ENCODE measurements at regions of chr4 and their contacts with region 1.

Region 1: DNA sequence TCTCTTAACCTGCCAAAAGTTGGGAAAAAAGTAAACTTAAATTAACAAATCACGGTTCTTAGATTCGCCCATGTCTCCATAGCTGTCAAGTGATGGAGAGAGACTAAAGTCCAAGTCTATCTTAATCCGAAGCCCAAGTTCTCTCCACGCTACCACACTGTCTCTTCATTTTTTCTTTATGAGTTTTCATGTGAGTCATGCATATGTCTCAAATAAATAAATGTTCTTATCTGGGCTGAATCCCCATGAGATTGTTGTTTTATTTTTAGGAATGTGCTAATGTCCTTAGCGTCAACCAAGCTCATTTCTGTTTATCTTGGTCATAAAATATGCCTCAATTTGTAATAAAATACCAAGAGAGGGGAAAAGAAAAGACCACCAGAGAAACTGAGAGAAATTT is 169.3 kb downstream of the RCHY1 start:
- DNase-seq: no peak
- H3K4me3 ChIP-seq: no peak overlapping the region
- H3K27ac ChIP-seq: peak overlapping the region in 5 of 59 donors; percentile 7 to 52 (median 30)
- H3K27me3 ChIP-seq: no peaks in the 10 kb centered on the region
- CTCF ChIP-seq: no peak

Region 2: DNA sequence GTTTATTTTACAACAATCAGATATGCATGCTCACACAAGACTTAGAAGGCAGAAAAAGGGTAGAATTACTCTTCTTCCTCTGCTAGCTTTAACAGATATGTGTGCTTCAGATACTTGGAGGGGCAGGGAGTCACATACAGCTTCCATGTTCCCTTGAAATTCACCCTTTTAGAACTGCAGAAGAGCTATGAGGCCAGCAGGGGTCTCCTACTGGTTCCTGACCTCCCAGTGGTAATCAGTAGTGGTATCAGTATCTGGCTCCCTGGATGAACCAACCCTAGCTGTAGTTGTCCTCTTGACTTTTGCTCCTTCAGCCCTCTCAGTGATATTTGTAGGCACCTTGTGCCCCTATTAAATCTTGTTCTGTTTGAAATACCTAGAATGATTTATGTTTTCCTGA is 87.8 kb after region 1 on chr4:
- intact Hi-C with region 1: loop called in 1 of 2 experiments (anchors 10 kb)
- DNase-seq: no peak
- H3K4me3 ChIP-seq: no peak overlapping the region
- H3K27ac ChIP-seq: no peak overlapping the region
- H3K27me3 ChIP-seq: peaks cover 0 to 5% (median 0%) of the 10 kb centered on the region in 45 donors
- CTCF ChIP-seq: peak in 1 of 56 donors; percentile 7

Region 3: GRCh38 chr4:75490155-75490554 is 145.2 kb after region 1 on chr4:
- intact Hi-C with region 1: no loop called
- DNase-seq: no peak
- H3K4me3 ChIP-seq: no peak overlapping the region
- H3K27ac ChIP-seq: peak overlapping the region in 5 of 59 donors; percentile 12 to 23 (median 16)
- H3K27me3 ChIP-seq: no peaks in the 10 kb centered on the region
- CTCF ChIP-seq: peak in 54 of 56 donors; percentile 15 to 71 (median 46)